Activated CD4-positive, alpha-beta memory T cell treated with anti-CD3 and anti-CD28 coated beads for 36 hours (primary cell): ENCODE measurements at regions of chr12 and their contacts with region 1.

Region 1: GRCh38 chr12:122951979-122952892 is 14.0 kb downstream of the ABCB9 start:
- DNase-seq: peak; percentile 85
- H3K4me3 Mint-ChIP-seq: no peak overlapping the region
- H3K27ac Mint-ChIP-seq: no peak overlapping the region
- H3K4me1 Mint-ChIP-seq: peaks cover 4% of the 10 kb centered on the region
- H3K27me3 Mint-ChIP-seq: no peaks in the 10 kb centered on the region

Region 2: DNA sequence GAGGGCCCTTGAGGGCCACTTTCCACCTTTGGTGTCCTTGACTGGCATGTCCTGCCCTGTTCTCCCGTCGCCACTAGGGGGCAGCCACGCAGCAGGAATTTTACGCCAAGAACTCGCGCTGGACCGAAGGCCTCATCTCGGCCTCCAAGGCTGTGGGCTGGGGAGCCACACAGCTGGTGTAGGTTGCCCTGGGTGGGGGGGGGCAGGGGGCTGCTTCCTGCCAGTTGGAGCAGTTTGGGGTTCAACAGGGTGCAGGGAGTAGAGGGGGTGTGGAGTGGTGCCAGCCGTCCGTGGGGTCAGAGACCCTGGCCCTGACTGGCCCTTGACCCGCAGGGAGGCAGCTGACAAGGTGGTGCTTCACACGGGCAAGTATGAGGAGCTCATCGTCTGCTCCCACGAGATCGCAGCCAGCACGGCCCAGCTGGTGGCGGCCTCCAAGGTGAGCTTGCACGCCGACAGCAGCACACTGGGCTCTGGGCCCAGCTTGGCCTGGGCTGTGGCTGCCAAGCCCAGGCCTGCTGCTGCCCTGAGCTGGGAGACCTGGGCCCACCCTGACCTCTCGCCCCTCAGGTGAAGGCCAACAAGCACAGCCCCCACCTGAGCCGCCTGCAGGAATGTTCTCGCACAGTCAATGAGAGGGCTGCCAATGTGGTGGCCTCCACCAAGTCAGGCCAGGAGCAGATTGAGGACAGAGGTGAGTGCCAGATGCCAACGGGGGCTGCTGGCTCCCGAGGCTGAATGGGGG is 91.7 kb before region 1 on chr12:
- CTCF ChIA-PET with region 1: interaction called, 239 read pairs
- POLR2A ChIA-PET with region 1: interaction called, 6 read pairs
- intact Hi-C with region 1: loop called (anchors 1 kb)
- DNase-seq: peak; percentile 88
- H3K4me3 Mint-ChIP-seq: no peak overlapping the region
- H3K27ac Mint-ChIP-seq: no peak overlapping the region
- H3K4me1 Mint-ChIP-seq: no peaks in the 10 kb centered on the region
- H3K27me3 Mint-ChIP-seq: no peaks in the 10 kb centered on the region

Region 3: DNA sequence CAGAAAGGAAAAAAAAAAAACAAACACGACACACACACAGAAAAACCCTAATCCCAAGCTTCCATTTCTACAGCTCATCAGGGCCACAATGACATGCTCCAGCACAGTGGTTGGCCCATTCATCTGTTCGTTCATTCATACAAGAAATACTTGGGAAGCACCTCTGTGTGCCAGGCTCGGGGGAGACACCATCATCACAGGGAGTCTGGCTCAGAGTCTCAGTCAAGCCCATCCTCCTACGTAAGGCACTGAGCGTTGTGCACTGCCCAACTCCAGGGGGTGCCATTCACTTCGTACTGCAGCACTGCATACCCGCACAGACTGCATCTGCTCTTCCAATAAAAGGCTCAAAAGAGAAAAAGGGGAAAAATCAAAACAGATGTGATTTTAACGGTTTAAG is 71.6 kb before region 1 on chr12:
- CTCF ChIA-PET with region 1: interaction called, 14 read pairs
- POLR2A ChIA-PET with region 1: no interaction called
- intact Hi-C with region 1: loop called (anchors 1 kb)
- DNase-seq: peak; percentile 49
- H3K4me3 Mint-ChIP-seq: no peak overlapping the region
- H3K27ac Mint-ChIP-seq: no peak overlapping the region
- H3K4me1 Mint-ChIP-seq: peaks cover 71% of the 10 kb centered on the region
- H3K27me3 Mint-ChIP-seq: peaks cover 26% of the 10 kb centered on the region